Activated CD8-positive, alpha-beta memory T cell treated with anti-CD3 and anti-CD28 coated beads, Interleukin-2, amount 10 ng/mL, durations not matched to agents 7 days and 5 days (primary cell): ENCODE measurements at regions of chr4 and their contacts with region 1.

Region 1: GRCh38 chr4:26330186-26330787 is 9.5 kb downstream of the RBPJ start:
- DNase-seq: no peak
- ATAC-seq: peak; percentile 81
- H3K4me3 Mint-ChIP-seq: no peak overlapping the region
- H3K27ac Mint-ChIP-seq: no peak overlapping the region
- H3K4me1 Mint-ChIP-seq: peaks cover 39% of the 10 kb centered on the region
- H3K27me3 Mint-ChIP-seq: no peaks in the 10 kb centered on the region

Region 2: DNA sequence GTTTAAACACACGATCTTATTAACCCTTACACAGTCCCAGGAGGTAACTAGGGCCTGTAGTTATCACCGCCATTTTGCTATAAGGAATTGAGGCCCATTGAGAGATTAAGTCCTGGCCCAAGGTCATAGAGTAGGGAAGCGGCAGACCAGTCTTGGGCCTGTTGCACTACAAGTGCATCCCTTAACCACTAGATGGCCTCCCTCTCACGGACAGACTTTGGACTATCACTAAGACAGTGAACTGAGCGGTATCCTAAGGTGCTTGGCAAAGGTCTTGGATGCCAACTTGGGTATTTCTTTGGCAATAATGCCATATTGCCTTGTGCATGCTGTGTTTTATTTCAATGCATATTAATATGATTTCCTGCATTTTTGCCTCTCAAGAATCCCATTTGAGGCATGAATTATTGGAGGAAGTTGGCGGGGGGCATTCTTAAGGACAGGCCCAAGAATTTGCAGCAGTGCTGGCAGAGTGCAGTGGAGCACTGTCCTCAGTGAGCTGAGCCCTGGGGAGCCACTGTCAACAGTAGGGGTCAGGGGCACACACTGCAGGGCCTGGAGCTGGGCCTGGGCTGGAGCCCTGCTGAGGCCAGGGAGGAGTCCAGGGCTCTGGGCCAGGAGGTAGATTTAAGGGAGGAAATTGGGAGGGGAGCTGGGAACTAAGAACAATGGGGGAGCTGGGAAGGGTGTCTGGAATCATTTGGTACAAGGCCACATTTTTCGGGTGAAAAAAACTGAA is 268.9 kb before region 1 on chr4:
- CTCF ChIA-PET with region 1: interaction called, 36 read pairs
- DNase-seq: peak; percentile 59
- ATAC-seq: peak; percentile 82
- H3K4me3 Mint-ChIP-seq: no peak overlapping the region
- H3K27ac Mint-ChIP-seq: no peak overlapping the region
- H3K4me1 Mint-ChIP-seq: peaks cover 19% of the 10 kb centered on the region
- H3K27me3 Mint-ChIP-seq: peaks cover 3% of the 10 kb centered on the region

Region 3: DNA sequence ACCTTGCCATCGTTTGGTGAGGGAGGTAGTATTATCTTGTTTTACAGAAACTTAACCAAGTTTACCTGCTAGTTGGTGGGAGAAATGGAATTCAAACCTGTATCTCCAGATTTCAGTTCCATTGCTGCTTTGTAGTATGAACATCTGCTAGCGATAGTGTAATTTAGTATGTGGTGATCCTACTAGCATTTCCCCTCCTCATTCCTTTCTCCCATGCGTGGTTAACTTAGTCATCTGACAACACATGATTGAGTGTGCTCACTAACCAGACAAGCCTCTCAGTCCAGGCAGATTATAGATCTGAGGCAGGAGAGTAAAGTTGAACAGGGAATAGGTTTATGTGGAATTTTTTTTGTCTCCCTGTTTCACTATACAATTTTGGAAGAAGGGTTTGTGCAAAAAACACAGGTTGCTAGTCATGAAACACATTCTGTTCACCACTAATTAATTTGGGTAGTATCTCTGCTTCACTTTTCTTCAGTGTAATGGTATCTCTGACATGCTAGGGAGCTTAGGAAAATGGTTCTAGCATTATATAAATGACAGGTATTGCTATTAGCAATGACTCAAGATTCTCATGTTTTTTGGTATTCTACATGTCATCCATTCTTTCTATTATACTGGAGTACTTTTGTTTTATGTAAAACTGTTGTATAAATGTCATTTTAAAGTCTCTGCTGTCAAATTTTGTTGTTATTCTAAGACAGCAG is 12.2 kb after region 1 on chr4:
- CTCF ChIA-PET with region 1: interaction called, 24 read pairs
- DNase-seq: no peak
- ATAC-seq: peak; percentile 49
- H3K4me3 Mint-ChIP-seq: no peak overlapping the region
- H3K27ac Mint-ChIP-seq: no peak overlapping the region
- H3K4me1 Mint-ChIP-seq: peaks cover 44% of the 10 kb centered on the region
- H3K27me3 Mint-ChIP-seq: no peaks in the 10 kb centered on the region

Region 4: GRCh38 chr4:26402458-26402857 is 72.2 kb after region 1 on chr4:
- CTCF ChIA-PET with region 1: interaction called, 259 read pairs
- DNase-seq: no peak
- ATAC-seq: no peak
- H3K4me3 Mint-ChIP-seq: no peak overlapping the region
- H3K27ac Mint-ChIP-seq: peak overlapping the region; percentile 11
- H3K4me1 Mint-ChIP-seq: peaks cover 25% of the 10 kb centered on the region
- H3K27me3 Mint-ChIP-seq: no peaks in the 10 kb centered on the region